Activated naive CD4-positive, alpha-beta T cell treated with anti-CD3 and anti-CD28 coated beads for 36 hours (primary cell): ENCODE measurements at regions of chr2 and their contacts with region 1.

Region 1: GRCh38 chr2:135664623-135665068 is 77.0 kb upstream of the UBXN4 start:
- DNase-seq: no peak
- H3K4me3 Mint-ChIP-seq: no peak overlapping the region
- H3K27ac Mint-ChIP-seq: peak overlapping the region; percentile 24
- H3K4me1 Mint-ChIP-seq: peaks cover 27% of the 10 kb centered on the region
- H3K27me3 Mint-ChIP-seq: no peaks in the 10 kb centered on the region

Region 2: DNA sequence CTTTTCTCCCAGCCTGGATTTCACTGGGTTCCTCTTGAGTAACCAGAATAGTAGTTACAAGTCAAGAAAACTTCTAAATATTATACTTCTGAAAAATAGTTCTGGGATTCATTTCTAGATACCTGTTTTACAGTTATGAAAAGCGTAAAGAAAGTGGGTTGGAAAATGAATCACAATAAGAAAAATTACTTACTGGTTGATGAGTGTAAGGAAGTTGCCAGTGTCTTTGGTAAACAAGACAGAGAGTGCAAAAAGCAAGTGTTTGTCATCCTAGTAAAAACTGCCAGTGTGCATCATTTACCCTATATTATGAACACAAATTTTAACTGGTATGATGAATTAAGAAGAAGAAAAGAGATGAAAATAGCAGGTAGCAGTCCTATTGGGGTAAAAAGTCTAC is 44.4 kb before region 1 on chr2:
- CTCF ChIA-PET with region 1: no interaction called
- intact Hi-C with region 1: loop called (anchors 1 kb)
- DNase-seq: no peak
- H3K4me3 Mint-ChIP-seq: no peak overlapping the region
- H3K27ac Mint-ChIP-seq: no peak overlapping the region
- H3K4me1 Mint-ChIP-seq: peaks cover 9% of the 10 kb centered on the region
- H3K27me3 Mint-ChIP-seq: no peaks in the 10 kb centered on the region

Region 3: GRCh38 chr2:135689679-135690078 is 25.0 kb after region 1 on chr2:
- CTCF ChIA-PET with region 1: no interaction called
- intact Hi-C with region 1: loop called (anchors 2 kb)
- DNase-seq: no peak
- H3K4me3 Mint-ChIP-seq: peak overlapping the region; percentile 45
- H3K27ac Mint-ChIP-seq: peak overlapping the region; percentile 76
- H3K4me1 Mint-ChIP-seq: peaks cover 28% of the 10 kb centered on the region
- H3K27me3 Mint-ChIP-seq: no peaks in the 10 kb centered on the region